ENCODE measurements at regions of chr15 and their contacts with region 1.

Region 1: DNA sequence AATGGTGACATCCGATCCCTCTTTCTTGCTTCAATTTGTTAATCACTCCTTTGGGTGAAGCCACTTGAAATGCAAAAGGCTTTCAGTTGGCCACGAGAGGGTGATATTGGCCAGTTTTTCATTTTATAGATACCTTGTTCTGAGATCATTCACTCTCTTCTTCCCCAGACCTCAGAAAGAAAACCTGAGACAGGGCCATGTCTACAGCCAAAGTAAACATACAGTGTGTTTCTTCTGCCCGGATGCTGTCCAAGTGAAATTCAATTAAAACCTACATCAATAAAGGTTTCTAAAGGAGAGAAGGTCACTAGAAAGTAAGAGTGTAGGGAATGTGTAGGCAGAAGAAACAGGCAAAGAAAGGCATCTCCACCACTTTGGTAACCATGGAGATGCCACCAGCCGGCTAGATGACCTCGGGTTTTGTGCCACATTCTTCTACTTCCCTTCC is 39.5 kb upstream of the FMN1 start:
- DNase-seq: no peak
- ATAC-seq: peak; percentile 44

Region 2: DNA sequence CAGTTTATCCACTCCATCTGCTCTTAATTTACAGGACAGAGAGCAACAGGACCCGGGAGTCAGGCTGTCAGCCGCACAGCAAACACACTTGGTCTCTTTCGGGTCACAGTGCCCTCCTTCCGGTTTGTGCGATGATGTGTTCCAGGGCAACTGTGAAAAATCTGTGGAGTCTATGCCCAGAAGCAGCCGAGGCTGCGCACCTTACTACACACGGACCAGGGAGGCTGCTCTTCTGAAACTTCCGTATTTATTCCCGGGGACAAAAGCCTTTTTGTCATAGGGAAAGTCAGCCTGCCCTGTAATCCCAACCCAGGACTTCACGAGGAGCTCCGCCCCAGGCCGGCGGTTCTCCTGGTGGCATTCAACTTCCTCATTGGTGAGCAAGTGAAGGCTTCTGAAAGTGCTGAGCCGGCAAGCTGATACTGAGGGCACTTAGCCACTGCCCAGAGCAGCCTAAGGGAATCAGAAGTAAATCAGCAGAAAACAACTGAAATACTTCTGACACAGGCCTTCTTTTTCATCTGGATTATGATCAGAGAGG is 166.0 kb before region 1 on chr15:
- intact Hi-C with region 1: loop called in 1 of 2 experiments (anchors 10 kb)
- DNase-seq: peak; percentile 84 to 92
- ATAC-seq: peak; percentile 82

Measured in left colon (tissue), 2 donors.